ENCODE measurements at regions of chr4 and their contacts with region 1.

Region 1: DNA sequence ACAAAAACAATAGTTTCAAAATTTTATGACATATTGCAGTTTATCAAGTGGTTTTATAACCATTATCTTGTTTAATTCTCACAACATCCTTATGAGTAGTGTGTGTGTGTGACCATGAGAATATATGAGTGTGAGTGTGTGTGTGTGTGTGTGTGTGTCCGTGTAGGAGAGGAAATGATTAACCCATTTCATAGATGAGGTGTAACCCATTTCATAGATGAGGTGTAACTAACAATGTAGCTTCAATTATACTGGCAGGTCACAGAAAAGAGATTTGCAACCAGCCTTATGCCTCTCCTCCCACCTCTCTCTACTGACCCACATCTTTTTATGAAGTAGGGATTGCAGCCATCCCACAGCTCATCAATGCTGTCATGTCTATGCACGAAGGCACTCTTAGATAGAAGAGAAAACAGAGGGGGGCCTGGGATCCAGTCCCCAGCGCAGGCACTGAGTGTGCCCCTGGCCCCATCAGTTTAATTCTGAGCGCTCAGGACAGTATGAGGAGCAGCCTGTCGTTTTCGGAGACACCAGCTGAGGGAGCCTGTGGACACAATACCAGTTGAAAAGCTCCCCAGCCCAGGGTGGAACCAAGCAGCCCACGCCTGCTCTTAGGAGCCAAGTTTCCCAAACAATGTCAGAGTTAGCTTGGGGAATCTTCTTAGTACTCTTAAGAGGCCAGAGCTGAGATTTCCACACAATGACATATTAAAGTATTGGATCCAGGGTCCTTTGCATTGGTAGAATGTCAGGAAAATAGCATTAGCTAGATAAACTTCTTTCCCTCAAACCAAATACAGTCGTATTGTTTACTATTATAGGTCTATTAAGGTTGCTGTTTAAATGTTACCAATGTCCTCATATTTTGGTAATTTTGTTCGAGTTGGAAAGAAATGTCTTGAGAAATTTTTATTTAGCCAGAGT is 88.6 kb downstream of the PALLD start:
- DNase-seq: peak; percentile 53
- H3K4me3 Mint-ChIP-seq: no peak overlapping the region
- H3K27ac Mint-ChIP-seq: no peak overlapping the region
- H3K4me1 Mint-ChIP-seq: peaks cover 2% of the 10 kb centered on the region
- H3K27me3 Mint-ChIP-seq: peaks cover 17% of the 10 kb centered on the region

Region 2: DNA sequence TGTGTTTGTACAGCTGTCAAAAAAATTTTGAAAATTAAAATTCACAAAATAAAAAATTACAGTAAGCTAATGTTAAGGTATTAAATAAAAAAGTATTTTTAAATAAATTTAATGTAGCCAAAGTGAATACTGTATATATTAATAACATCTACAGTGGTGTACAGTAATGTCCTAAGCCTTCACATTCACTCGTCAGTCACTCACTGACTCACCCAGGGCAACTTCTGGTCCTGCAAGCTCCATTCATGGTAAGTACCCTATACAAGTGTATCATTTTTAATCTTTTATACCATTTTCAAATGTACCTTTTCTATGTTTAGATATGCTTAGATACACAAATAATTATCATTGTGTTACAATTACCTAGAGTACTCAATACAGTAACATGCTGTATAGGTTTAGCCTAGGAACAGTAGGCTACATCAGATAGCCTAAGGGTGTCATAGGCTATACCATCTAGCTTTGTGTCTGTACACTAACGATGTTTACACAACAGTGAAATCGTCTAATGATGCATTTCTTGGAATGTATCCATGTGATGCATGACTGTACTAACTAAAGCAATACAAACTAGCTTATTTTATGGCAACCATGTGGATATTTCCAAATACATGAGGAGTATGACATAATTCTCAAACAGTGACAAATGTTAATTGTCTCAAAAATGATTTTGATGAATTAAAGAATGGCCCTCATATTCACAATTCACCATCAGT is 280.5 kb before region 1 on chr4:
- CTCF ChIA-PET with region 1: no interaction called
- intact Hi-C with region 1: no loop called
- DNase-seq: no peak
- H3K4me3 Mint-ChIP-seq: no peak overlapping the region
- H3K27ac Mint-ChIP-seq: no peak overlapping the region
- H3K4me1 Mint-ChIP-seq: peaks cover 19% of the 10 kb centered on the region
- H3K27me3 Mint-ChIP-seq: no peaks in the 10 kb centered on the region

Region 3: GRCh38 chr4:168496834-168497233 is 88.6 kb before region 1 on chr4 and contains the start of gene PALLD:
- CTCF ChIA-PET with region 1: no interaction called
- intact Hi-C with region 1: no loop called
- DNase-seq: no peak
- H3K4me3 Mint-ChIP-seq: no peak within 1 kb of the TSS
- H3K27ac Mint-ChIP-seq: no peak within 1 kb of the TSS
- H3K4me1 Mint-ChIP-seq: no peaks in the 10 kb centered on the region
- H3K27me3 Mint-ChIP-seq: peaks cover 4% of the 10 kb centered on the region
- total RNA-seq, gene PALLD: 7.3 to 7.8 TPM

Region 4: DNA sequence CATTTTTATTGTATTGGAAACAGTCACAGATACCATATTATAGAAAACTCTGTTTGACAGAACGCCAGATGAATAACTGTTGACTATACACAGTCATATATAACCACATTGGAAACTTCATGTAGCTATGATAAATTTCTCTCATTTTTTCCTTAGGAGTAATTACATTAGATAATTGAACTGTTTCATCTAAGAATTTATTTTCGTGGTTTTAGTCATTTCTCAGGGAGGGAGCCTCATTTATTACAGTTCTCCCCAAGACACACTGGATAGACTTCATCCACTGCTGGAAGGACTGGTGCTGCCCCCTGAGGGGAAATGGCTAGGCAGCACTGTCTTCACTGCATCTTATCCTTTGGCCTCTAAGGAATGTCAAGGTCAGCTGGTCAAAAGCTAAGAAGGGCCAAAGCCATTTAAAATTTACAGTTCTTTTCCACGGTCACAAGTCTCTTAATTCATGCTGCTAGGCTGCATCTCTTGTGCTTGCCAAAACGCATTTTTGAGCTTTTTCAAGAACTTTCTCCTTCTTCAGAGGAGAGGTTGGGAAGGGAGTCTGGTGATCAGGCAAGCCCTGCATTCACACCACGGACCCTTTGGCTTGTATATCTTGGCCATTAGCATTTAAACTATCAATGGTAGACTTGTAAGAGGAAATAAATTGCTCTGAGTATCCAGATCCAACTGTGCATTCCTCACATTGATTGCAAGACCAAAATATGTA is 279.6 kb after region 1 on chr4:
- CTCF ChIA-PET with region 1: no interaction called
- intact Hi-C with region 1: no loop called
- DNase-seq: no peak
- H3K4me3 Mint-ChIP-seq: no peak overlapping the region
- H3K27ac Mint-ChIP-seq: no peak overlapping the region
- H3K4me1 Mint-ChIP-seq: peaks cover 8% of the 10 kb centered on the region
- H3K27me3 Mint-ChIP-seq: no peaks in the 10 kb centered on the region

Region 5: GRCh38 chr4:168917138-168917779 is 331.8 kb after region 1 on chr4:
- CTCF ChIA-PET with region 1: interaction called, 7 read pairs
- intact Hi-C with region 1: loop called (anchors 1 kb)
- DNase-seq: no peak
- H3K4me3 Mint-ChIP-seq: no peak overlapping the region
- H3K27ac Mint-ChIP-seq: no peak overlapping the region
- H3K4me1 Mint-ChIP-seq: no peaks in the 10 kb centered on the region
- H3K27me3 Mint-ChIP-seq: no peaks in the 10 kb centered on the region

Measured in activated naive CD4-positive, alpha-beta T cell treated with anti-CD3 and anti-CD28 coated beads for 36 hours (primary cell).